Lower leg skin (tissue), 4 donors: ENCODE measurements at regions of chr14 and their contacts with region 1.

Region 1: GRCh38 chr14:52835122-52835903 is 43.9 kb upstream of the GNPNAT1 start:
- DNase-seq: peak in 1 of 2 donors; percentile 18
- H3K4me3 ChIP-seq: no peak overlapping the region
- CTCF ChIP-seq: no peak
- POLR2A ChIP-seq: no peak

Region 2: GRCh38 chr14:53306267-53306721 is 471.0 kb after region 1 on chr14:
- intact Hi-C with region 1: loop called (anchors 10 kb)
- DNase-seq: no peak
- H3K4me3 ChIP-seq: no peak overlapping the region
- CTCF ChIP-seq: peak in 1 of 3 donors; percentile 57
- POLR2A ChIP-seq: no peak

Region 3: DNA sequence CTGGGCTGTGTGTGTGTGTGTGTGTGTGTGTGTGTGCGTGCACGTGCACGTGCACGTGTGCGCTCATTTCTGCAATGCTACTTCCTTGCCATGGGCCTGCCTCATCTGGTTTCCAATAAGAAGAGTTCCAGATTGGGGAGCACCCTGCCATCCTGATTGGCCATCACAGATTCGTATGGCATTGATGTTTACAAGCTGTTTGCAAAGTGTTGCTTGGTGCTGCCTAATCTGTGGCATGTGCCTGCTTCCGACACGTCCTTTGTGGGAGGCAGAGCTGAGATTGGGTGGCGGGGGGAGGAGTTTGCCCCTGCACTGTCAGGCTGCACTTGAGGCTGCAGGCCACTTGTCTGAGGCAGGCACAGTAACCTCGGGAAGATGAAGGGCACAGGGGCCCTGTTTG is 1770.9 kb after region 1 on chr14:
- intact Hi-C with region 1: no loop called
- DNase-seq: peak; percentile 58 to 85
- H3K4me3 ChIP-seq: no peak overlapping the region
- CTCF ChIP-seq: no peak
- POLR2A ChIP-seq: no peak